MCF 10A (cell line): ENCODE measurements at regions of chr3 and their contacts with region 1.

Region 1: DNA sequence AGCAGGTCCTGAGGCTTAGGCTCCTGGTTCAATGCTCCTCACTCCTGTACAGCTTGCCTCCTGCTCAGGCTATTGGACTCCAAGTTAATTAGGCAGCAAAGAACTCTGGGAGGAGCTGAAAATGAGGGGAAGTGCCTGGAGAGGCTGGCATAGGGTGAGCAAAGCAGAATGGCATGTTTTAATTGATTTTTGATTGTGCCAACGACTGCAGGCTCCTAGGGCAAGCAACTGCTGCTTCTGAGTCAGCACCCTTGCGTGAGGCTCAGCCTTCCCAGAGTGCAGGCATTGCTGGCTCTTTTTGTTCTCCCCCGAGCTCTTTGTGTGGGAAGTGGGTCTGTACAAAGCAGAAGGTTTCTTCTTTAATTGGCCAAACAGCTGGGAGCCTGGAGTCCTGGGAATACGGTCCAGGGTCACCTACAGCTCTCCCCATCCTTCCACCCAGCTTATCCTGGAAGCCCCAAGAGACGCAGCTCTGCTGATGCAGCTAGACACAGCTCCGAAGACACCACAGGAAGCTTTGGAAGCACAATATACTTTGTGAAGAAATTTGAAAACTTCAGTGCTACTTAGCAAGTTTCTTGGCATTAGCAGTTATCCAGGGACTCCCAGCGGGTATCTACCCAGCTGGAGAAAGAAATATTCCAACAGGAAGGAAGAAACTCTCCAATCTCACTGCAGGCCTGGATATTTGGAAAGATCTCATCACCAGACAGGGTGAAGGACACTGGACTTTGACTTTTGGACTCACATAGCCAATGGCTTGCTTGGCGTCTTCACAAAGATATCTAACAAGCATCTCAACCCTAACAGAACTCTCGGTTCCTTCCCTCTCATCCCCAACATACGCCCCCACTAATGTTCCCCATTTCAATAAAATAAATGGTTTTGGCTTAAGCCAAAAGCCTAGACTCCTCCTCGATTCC is 76.8 kb downstream of the BDH1 start:
- DNase-seq: peak; percentile 61
- H3K4me3 Mint-ChIP-seq: no peak overlapping the region
- H3K27ac Mint-ChIP-seq: peak overlapping the region; percentile 27
- H3K4me1 Mint-ChIP-seq: peaks cover 31% of the 10 kb centered on the region
- H3K27me3 Mint-ChIP-seq: no peaks in the 10 kb centered on the region
- CTCF ChIP-seq: no peak

Region 2: GRCh38 chr3:197466586-197467399 is 12.2 kb before region 1 on chr3:
- CTCF ChIA-PET with region 1: interaction called, 7 read pairs
- POLR2A ChIA-PET with region 1: interaction called, 21 read pairs
- intact Hi-C with region 1: no loop called
- DNase-seq: peak; percentile 65
- H3K4me3 Mint-ChIP-seq: no peak overlapping the region
- H3K27ac Mint-ChIP-seq: no peak overlapping the region
- H3K4me1 Mint-ChIP-seq: peaks cover 16% of the 10 kb centered on the region
- H3K27me3 Mint-ChIP-seq: no peaks in the 10 kb centered on the region
- CTCF ChIP-seq: no peak